Head of caudate nucleus (tissue), 42 donors: ENCODE measurements at regions of chr5 and their contacts with region 1.

Region 1: GRCh38 chr5:180860887-180861822 is at the start of gene ZFP62:
- DNase-seq: peak; percentile 79 to 94 (median 89)

Region 2: GRCh38 chr5:180343831-180344327 is 517.3 kb before region 1 on chr5:
- intact Hi-C with region 1: no loop called
- DNase-seq: peak in 16 of 42 donors; percentile 27 to 62 (median 44)

Region 3: DNA sequence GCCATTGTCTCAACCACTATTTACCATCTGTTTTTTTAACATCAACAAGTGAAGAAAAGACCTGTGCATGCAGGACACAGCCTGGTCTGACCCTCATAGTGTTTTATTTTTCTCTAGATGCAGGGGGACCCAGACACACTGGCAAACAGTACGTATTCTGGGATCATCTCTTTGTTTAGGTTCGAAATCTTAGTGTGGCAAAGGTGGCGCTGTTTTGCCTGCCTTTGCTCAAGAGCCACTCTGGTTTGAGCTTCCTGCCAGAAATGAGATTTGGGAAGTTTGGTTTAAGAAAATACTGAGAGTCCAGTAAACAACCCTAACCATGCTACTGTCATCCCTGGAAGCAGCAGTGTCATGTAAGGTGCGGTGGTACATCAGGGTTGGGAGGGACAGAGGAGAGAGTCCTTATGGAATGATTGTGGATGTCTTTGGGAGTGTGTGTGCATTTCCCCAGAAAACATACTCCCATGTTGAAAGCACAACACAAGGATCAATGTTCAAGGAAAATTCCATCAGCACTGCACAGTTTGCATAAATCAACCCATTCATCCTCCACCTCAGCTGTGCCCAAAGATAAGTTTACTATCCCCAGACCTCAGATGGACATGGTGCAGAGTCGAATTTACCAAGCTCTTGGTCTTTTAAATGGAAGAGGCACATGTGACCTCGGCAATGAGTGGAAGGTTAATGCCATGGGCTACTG is 177.8 kb before region 1 on chr5:
- intact Hi-C with region 1: no loop called
- DNase-seq: no peak

Region 4: DNA sequence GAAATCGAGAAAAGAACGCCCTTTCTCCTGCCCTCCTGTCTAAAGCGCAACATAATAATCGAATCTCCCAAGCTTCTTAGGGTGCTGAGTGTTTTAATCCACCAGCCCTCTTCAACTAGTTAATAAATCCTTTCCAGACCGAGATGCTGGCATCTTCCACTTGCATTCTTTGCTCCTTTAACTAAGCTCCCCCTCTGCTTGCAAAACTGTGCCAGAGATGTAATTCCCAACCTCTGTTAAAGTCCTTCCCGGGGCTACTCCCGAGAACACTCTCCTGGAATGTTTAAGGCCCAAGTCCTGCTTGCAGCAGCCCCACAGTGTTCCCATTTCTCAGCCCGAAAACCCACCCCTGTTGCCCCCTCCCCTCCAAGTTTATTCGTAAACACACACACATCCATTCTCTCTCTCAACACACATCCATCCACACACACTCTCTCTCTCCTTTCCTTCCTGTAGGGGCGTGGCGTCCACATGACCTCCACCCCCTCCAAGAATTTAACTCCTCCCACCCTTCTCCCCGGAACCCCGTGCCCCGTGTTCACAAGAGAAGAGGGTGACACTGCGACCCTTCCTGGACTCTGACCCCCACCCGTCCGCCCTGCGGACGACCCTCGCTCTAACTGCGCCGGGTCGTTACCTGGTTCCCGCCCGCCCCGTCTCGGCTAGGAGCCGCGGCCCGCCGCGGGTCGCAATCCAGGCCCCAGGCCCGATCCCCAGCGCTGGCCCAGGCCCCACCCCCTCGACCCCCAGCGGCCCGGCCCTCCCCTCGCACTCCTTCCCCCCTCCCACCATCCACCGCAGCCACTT is 51.5 kb before region 1 on chr5:
- intact Hi-C with region 1: loop called (anchors 5 kb)
- DNase-seq: peak; percentile 79 to 96 (median 89)

Region 5: DNA sequence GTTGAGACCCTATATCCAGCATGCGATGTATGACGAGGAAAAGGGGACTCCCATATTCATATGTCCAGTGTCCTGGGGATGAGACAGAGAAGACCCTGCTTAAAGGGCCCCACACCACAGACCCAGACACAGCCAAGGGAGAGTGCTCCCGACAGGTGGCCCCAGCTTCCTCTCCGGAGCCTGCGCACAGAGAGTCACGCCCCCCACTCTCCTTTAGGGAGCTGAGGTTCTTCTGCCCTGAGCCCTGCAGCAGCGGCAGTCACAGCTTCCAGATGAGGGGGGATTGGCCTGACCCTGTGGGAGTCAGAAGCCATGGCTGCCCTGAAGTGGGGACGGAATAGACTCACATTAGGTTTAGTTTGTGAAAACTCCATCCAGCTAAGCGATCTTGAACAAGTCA is 144.6 kb after region 1 on chr5:
- intact Hi-C with region 1: no loop called
- DNase-seq: no peak